ENCODE measurements at regions of chr9 and their contacts with region 1.

Region 1: DNA sequence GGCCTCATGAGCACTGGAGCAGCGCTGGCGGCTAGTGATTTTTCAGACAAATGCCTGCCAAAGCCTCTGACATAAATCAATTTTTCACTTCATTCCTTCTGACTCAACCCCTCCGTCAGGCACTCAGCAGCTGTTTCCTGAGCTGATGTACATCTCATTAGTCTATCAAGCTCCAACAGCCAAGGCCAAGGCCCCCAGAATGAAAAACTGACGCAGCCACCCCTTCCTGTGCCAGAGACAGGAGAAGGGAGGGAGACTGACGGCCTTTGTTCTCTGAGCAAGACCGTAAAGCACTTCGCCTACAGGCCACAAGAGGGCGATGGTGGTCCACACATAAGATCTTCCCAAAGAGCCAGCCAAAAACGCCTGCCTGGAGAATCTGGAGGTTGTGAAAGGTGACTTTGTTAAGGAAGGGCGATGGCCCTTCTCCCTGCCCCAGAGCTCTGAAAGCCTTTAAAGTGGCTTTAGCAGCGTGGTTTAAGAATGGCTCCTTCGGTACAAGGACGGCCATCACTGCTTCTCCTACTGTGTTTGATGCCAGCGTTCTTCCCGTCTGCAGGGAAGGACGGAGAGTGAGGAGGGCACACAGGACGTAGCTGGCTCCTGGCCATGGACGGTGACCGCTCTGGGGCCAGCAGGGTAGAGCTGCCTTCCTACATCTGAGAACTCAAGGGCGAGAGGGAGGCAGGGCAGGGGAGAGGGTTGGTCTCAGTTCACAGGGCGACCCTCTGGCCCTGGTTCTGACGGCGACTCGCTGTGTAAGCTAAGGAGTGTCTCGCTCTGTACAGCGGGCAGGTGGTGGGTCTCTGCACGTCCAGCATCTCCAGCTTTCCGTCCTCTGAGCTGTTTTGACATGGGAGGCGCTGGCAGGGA is 37.0 kb downstream of the ALG2 start:
- DNase-seq: peak; percentile 75 to 89 (median 78)
- ATAC-seq: peak; percentile 96
- H3K4me3 ChIP-seq: no peak overlapping the region
- H3K27ac ChIP-seq: no peak overlapping the region
- H3K4me1 ChIP-seq: peaks cover 2 to 5% of the 10 kb centered on the region in 2 experiments; a peak in 3 of 5 replicates
- H3K27me3 ChIP-seq: peaks cover 18 to 37% of the 10 kb centered on the region in 2 experiments
- CTCF ChIP-seq: peak; percentile 83 to 96 (median 94)
- EP300 ChIP-seq: no peak
- POLR2A ChIP-seq: no peak
- RAD21 ChIP-seq: peak; percentile 77 to 90

Region 2: GRCh38 chr9:99231711-99232110 is 47.0 kb after region 1 on chr9:
- CTCF ChIA-PET with region 1: no interaction called
- POLR2A ChIA-PET with region 1: no interaction called
- in situ Hi-C with region 1: no loop called
- intact Hi-C with region 1: no loop called
- DNase-seq: peak; percentile 46 to 53 (median 49)
- ATAC-seq: peak; percentile 92
- H3K4me3 ChIP-seq: no peak overlapping the region
- H3K27ac ChIP-seq: no peak overlapping the region
- H3K4me1 ChIP-seq: no peaks in the 10 kb centered on the region
- H3K27me3 ChIP-seq: no peaks in the 10 kb centered on the region
- CTCF ChIP-seq: peak; percentile 65 to 80 (median 74)
- EP300 ChIP-seq: no peak
- POLR2A ChIP-seq: no peak
- RAD21 ChIP-seq: peak in 1 of 2 experiments; percentile 49; a peak in 3 of 4 replicates

Region 3: GRCh38 chr9:99299211-99300102 is 114.7 kb after region 1 on chr9:
- CTCF ChIA-PET with region 1: no interaction called
- POLR2A ChIA-PET with region 1: interaction called, 3 read pairs
- in situ Hi-C with region 1: no loop called
- intact Hi-C with region 1: loop called (anchors 10 kb)
- DNase-seq: no peak
- ATAC-seq: 0 out of 3 replicates have a peak, but pooled peaks have one; percentile 13
- H3K4me3 ChIP-seq: no peak overlapping the region
- H3K27ac ChIP-seq: no peak overlapping the region
- H3K4me1 ChIP-seq: peaks cover 5 to 14% of the 10 kb centered on the region in 2 experiments; a peak in 3 of 5 replicates
- H3K27me3 ChIP-seq: no peaks in the 10 kb centered on the region; a peak in 1 of 5 replicates
- CTCF ChIP-seq: peak; percentile 13 to 53 (median 21); a peak in 3 of 6 replicates
- EP300 ChIP-seq: no peak
- POLR2A ChIP-seq: no peak
- RAD21 ChIP-seq: peak; percentile 57 to 65

Region 4: GRCh38 chr9:99474186-99474585 is 289.5 kb after region 1 on chr9:
- CTCF ChIA-PET with region 1: no interaction called
- POLR2A ChIA-PET with region 1: no interaction called
- in situ Hi-C with region 1: no loop called
- intact Hi-C with region 1: loop called (anchors 10 kb)
- DNase-seq: no peak
- ATAC-seq: no peak
- H3K4me3 ChIP-seq: no peak overlapping the region
- H3K27ac ChIP-seq: no peak overlapping the region
- H3K4me1 ChIP-seq: no peaks in the 10 kb centered on the region
- H3K27me3 ChIP-seq: peaks cover 2 to 5% of the 10 kb centered on the region in 2 experiments; a peak in 1 of 5 replicates
- CTCF ChIP-seq: no peak
- EP300 ChIP-seq: no peak
- POLR2A ChIP-seq: no peak
- RAD21 ChIP-seq: no peak

Region 5: DNA sequence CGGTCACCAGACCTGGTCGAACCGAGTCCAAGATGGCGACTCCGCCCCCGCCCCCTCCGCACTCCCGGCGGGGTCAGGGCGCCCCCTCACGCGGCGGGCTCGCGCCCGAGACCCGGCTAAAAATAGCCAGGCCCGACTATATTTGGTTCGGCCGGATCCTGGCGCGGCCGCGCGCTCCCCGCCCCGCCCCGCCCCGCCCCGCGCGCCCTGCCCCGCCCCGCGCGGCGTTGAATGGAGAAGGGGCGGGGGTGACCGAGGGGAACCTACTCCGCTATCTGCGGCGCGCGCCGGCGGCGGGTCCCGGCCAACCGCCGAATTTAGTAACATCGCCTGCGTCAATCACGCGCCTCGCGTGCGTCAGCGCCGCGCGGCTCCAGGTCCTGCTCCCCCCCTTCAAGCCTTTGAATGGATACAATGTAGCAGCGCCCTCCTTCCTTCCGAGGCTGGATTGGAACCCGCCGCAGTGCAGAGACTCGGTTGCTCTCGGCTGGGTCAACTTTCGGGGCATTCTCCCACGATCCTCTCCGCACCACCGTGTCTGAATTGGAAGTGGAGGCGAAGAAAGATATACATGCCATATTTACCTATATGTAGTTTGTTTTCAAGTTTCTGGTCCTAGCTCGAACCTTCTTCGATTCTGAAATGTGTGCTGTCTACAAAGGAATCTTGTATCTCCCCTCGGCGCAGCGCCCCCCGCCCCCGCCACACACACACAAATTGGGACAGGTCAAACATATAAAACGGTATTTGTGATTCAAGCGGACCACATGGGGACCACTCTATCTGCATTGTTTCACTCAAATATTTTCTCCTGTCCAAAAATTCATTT is 635.4 kb after region 1 on chr9:
- CTCF ChIA-PET with region 1: interaction called, 3 read pairs
- POLR2A ChIA-PET with region 1: no interaction called
- in situ Hi-C with region 1: no loop called
- intact Hi-C with region 1: loop called (anchors 5 kb)
- DNase-seq: peak in 2 of 4 experiments; percentile 94 to 98
- ATAC-seq: peak; percentile 74
- H3K4me3 ChIP-seq: peak overlapping the region; percentile 84
- H3K27ac ChIP-seq: peak overlapping the region; percentile 96
- H3K4me1 ChIP-seq: peaks cover 12 to 42% of the 10 kb centered on the region in 2 experiments
- H3K27me3 ChIP-seq: peaks cover 21 to 30% of the 10 kb centered on the region in 2 experiments
- CTCF ChIP-seq: peak in 2 of 3 experiments; percentile 33 to 45; a peak in 4 of 6 replicates
- EP300 ChIP-seq: no peak; the same call in 1 of the 2 replicates
- POLR2A ChIP-seq: no peak; the same call in none of the 2 replicates
- RAD21 ChIP-seq: peak in 1 of 2 experiments; percentile 29; a peak in 2 of 4 replicates

Region 6: DNA sequence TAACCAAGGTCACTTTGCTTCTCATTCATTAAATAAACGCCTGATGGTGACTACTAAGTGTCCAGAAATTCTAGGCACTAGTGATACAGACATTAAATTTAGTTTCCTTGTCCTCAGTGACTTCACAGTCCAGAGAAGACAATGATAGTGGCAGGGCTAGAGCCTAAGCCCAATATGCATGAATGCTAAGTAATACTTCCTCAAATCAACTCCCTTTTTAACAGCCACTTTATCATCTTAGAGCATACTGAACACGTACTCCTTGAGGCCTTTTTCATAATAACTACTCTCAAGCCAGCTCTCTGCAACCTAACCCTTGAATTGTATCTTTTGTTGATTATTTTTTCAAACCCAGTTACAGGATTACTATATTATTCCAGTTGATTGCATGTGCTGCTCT is 795.9 kb after region 1 on chr9:
- CTCF ChIA-PET with region 1: no interaction called
- POLR2A ChIA-PET with region 1: no interaction called
- in situ Hi-C with region 1: no loop called
- intact Hi-C with region 1: loop called (anchors 10 kb)
- DNase-seq: no peak
- ATAC-seq: peak; percentile 56
- H3K4me3 ChIP-seq: no peak overlapping the region
- H3K27ac ChIP-seq: no peak overlapping the region
- H3K4me1 ChIP-seq: peaks cover 0 to 8% of the 10 kb centered on the region in 2 experiments; a peak in 1 of 5 replicates
- H3K27me3 ChIP-seq: no peaks in the 10 kb centered on the region
- CTCF ChIP-seq: no peak
- EP300 ChIP-seq: no peak
- POLR2A ChIP-seq: no peak
- RAD21 ChIP-seq: no peak

Region 7: DNA sequence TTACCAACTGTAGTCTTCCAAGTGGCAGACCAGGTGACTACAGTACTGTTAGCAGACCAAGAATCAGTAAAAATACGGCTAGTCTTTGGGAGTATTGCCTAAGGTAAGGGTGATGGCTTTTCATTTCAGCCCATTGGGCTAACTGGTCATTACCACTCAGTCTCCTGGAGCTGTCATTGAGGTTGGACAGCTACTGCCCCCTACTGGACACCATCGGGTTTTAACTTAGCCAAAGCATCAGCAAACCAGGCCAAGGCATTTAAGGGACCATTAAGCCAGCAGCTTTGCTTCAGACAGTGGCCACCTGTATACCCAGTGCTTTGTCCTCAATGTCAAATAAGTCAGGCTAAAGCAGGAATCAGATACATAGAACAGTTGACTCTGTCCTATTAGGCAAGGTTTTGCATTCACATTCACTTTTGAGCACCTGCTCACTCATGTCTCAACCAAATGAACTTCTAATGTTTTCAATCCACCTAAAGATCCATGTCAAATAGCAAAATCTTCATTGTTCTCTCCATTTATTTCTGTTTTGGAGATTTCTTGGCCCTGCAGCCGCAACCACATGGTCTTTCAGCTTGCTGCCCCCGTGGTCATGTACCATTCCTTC is 1031.6 kb after region 1 on chr9:
- CTCF ChIA-PET with region 1: no interaction called
- POLR2A ChIA-PET with region 1: no interaction called
- in situ Hi-C with region 1: loop called (anchors 10 kb)
- intact Hi-C with region 1: no loop called
- DNase-seq: peak; percentile 66 to 84 (median 74)
- ATAC-seq: peak; percentile 99
- H3K4me3 ChIP-seq: no peak overlapping the region
- H3K27ac ChIP-seq: no peak overlapping the region
- H3K4me1 ChIP-seq: peaks cover 0 to 12% of the 10 kb centered on the region in 2 experiments; a peak in 2 of 5 replicates
- H3K27me3 ChIP-seq: no peaks in the 10 kb centered on the region
- CTCF ChIP-seq: peak; percentile 84 to 88 (median 87)
- EP300 ChIP-seq: no peak
- POLR2A ChIP-seq: no peak
- RAD21 ChIP-seq: peak; percentile 83 to 92

Measured in K562 (cell line).